Activated T-helper 2 cell treated with anti-CD3 and anti-CD28 coated beads, Interferon-gamma antibody, Interleukin-2, Interleukin-4, amounts not matched to agents 10 μg/mL and 5 μg/mL and 100 μg/mL, durations not matched to agents 14 hours and 24 hours and 36 hours (primary cell): ENCODE measurements at regions of chr21 and their contacts with region 1.

Region 1: DNA sequence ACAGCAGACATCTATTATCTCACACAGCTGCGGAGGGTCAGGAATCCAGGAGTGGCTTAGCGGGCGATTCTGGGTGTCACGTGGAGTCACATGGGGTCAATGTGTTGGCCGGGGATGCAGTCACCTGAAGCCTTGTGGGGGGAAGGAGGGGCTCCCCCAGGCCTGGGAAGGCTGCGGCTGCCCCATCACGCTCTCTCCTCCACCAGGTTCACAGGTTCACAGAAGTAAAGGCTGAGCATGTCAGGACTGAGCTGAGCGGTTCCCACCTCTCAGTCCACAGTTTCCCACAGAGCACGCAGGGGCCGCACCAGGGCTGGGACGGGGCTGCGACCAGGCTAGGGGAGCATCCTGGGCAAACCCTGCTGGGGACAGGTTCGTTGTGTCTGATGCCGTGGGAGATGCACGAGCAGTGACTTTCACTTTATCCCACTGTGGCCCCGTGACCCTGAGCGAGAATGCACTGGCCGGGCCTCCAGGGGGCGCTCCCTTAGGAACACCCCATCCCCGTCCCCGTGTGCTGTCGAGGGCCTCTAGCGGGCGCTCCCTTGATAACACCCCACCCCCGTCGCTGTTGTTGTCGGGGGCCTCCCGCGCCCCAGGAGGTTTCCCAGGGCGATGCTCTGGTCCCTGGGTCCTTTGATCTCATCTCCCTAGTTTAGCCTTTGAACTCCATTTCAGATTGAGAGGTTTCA is 73.2 kb upstream of the TRAPPC10 start:
- DNase-seq: peak; percentile 86
- H3K4me3 Mint-ChIP-seq: peak overlapping the region; percentile 74
- H3K27ac Mint-ChIP-seq: peak overlapping the region; percentile 74
- H3K4me1 Mint-ChIP-seq: peaks cover 20% of the 10 kb centered on the region
- H3K27me3 Mint-ChIP-seq: no peaks in the 10 kb centered on the region

Region 2: GRCh38 chr21:43810505-43811261 is 128.2 kb before region 1 on chr21:
- intact Hi-C with region 1: loop called (anchors 2 kb)
- DNase-seq: peak; percentile 85
- H3K4me3 Mint-ChIP-seq: no peak overlapping the region
- H3K27ac Mint-ChIP-seq: peak overlapping the region; percentile 4
- H3K4me1 Mint-ChIP-seq: peaks cover 11% of the 10 kb centered on the region
- H3K27me3 Mint-ChIP-seq: no peaks in the 10 kb centered on the region

Region 3: DNA sequence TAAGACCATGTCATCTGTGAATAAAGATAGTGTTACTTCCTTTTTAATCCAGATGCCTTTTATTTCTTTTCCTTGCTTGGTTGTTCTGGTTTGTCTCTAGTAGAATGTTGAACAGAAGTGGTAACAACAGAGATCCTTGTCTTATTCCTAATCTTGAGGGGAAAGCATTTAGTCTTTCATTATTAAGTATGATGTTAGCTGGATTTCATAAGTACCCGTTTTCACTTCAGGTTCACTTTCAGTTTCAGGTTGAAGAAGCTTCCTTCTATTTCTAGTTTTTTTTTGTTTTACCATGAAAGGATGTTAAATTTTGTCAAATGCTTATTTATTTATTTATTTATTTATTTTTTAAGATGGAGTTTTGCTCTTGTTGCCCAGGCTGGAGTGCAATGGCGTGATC is 96.2 kb before region 1 on chr21:
- intact Hi-C with region 1: loop called (anchors 1 kb)
- DNase-seq: no peak
- H3K4me3 Mint-ChIP-seq: peak overlapping the region; percentile 20
- H3K27ac Mint-ChIP-seq: peak overlapping the region; percentile 29
- H3K4me1 Mint-ChIP-seq: peaks cover 16% of the 10 kb centered on the region
- H3K27me3 Mint-ChIP-seq: no peaks in the 10 kb centered on the region

Region 4: GRCh38 chr21:43874085-43874785 is 64.7 kb before region 1 on chr21:
- intact Hi-C with region 1: loop called (anchors 5 kb)
- DNase-seq: no peak
- H3K4me3 Mint-ChIP-seq: no peak overlapping the region
- H3K27ac Mint-ChIP-seq: peak overlapping the region; percentile 70
- H3K4me1 Mint-ChIP-seq: peaks cover 51% of the 10 kb centered on the region
- H3K27me3 Mint-ChIP-seq: no peaks in the 10 kb centered on the region

Region 5: GRCh38 chr21:43956670-43957035 is 17.8 kb after region 1 on chr21:
- intact Hi-C with region 1: no loop called
- DNase-seq: no peak
- H3K4me3 Mint-ChIP-seq: no peak overlapping the region
- H3K27ac Mint-ChIP-seq: no peak overlapping the region
- H3K4me1 Mint-ChIP-seq: peaks cover 12% of the 10 kb centered on the region
- H3K27me3 Mint-ChIP-seq: no peaks in the 10 kb centered on the region

Region 6: GRCh38 chr21:43975495-43975993 is 36.6 kb after region 1 on chr21:
- intact Hi-C with region 1: loop called (anchors 5 kb)
- DNase-seq: peak; percentile 75
- H3K4me3 Mint-ChIP-seq: no peak overlapping the region
- H3K27ac Mint-ChIP-seq: peak overlapping the region; percentile 63
- H3K4me1 Mint-ChIP-seq: peaks cover 10% of the 10 kb centered on the region
- H3K27me3 Mint-ChIP-seq: no peaks in the 10 kb centered on the region